Mammary epithelial cell (primary cell): ENCODE measurements at regions of chr2 and their contacts with region 1.

Region 1: GRCh38 chr2:193695367-193695766 is 1500.6 kb upstream of the TMEFF2 start:
- DNase-seq: peak; percentile 34
- H3K4me3 ChIP-seq: no peak overlapping the region
- H3K27ac ChIP-seq: no peak overlapping the region
- H3K4me1 ChIP-seq: no peaks in the 10 kb centered on the region
- H3K27me3 ChIP-seq: no peaks in the 10 kb centered on the region
- CTCF ChIP-seq: peak; percentile 48 to 59

Region 2: GRCh38 chr2:193446967-193447366 is 248.4 kb before region 1 on chr2:
- CTCF ChIA-PET with region 1: no interaction called
- dilution Hi-C with region 1: no loop called
- in situ Hi-C with region 1: no loop called
- intact Hi-C with region 1: no loop called
- DNase-seq: no peak
- H3K4me3 ChIP-seq: no peak overlapping the region
- H3K27ac ChIP-seq: no peak overlapping the region
- H3K4me1 ChIP-seq: no peaks in the 10 kb centered on the region
- H3K27me3 ChIP-seq: no peaks in the 10 kb centered on the region
- CTCF ChIP-seq: no peak

Region 3: GRCh38 chr2:193885175-193885818 is 189.9 kb after region 1 on chr2:
- CTCF ChIA-PET with region 1: no interaction called
- dilution Hi-C with region 1: no loop called
- in situ Hi-C with region 1: no loop called
- intact Hi-C with region 1: loop called (anchors 1 kb)
- DNase-seq: peak; percentile 6
- H3K4me3 ChIP-seq: no peak overlapping the region
- H3K27ac ChIP-seq: no peak overlapping the region
- H3K4me1 ChIP-seq: no peaks in the 10 kb centered on the region
- H3K27me3 ChIP-seq: no peaks in the 10 kb centered on the region
- CTCF ChIP-seq: peak in 1 of 2 donors; percentile 20

Region 4: GRCh38 chr2:193963472-193964119 is 268.2 kb after region 1 on chr2:
- CTCF ChIA-PET with region 1: no interaction called
- dilution Hi-C with region 1: no loop called
- in situ Hi-C with region 1: no loop called
- intact Hi-C with region 1: loop called (anchors 1 kb)
- DNase-seq: peak; percentile 37
- H3K4me3 ChIP-seq: no peak overlapping the region
- H3K27ac ChIP-seq: no peak overlapping the region
- H3K4me1 ChIP-seq: no peaks in the 10 kb centered on the region
- H3K27me3 ChIP-seq: no peaks in the 10 kb centered on the region
- CTCF ChIP-seq: peak; percentile 56 to 65

Region 5: GRCh38 chr2:194819344-194819743 is 1124.0 kb after region 1 on chr2:
- CTCF ChIA-PET with region 1: no interaction called
- dilution Hi-C with region 1: no loop called
- in situ Hi-C with region 1: no loop called
- intact Hi-C with region 1: loop called (anchors 10 kb)
- DNase-seq: peak; percentile 6
- H3K4me3 ChIP-seq: no peak overlapping the region
- H3K27ac ChIP-seq: no peak overlapping the region
- H3K4me1 ChIP-seq: peaks cover 13% of the 10 kb centered on the region
- H3K27me3 ChIP-seq: no peaks in the 10 kb centered on the region
- CTCF ChIP-seq: peak; percentile 13 to 49